T-cell (primary cell): ENCODE measurements at regions of chr14 and their contacts with region 1.

Region 1: DNA sequence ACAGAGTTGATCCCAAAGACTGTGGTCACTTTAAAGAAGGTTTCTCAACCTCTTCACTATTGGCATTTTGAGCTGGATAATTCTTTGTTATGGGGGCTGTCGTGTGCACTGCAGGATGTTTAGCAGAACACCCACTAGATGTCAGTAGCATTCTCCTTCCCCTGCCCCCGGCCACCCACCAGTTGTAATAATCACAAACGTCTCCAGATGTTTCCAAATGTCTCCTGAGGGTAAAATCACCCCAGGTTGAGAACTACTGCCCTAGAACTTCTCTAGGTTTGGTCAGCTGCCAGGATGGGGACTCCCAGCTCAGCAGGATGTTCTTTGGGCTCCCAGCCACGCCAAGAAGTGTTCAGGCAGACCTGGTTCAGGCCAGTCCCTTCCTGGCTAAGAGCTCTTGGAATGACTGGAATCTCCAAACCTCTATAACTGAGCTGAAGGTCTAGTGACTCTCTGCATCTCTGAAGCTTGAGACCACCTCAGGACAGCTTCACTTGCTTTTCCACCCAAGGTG is 12.5 kb upstream of the AJUBA start:
- DNase-seq: peak in 10 of 35 experiments; percentile 24 to 62 (median 32)
- ATAC-seq: peak; percentile 69 to 85 (median 75)
- H3K4me3 ChIP-seq: no peak overlapping the region
- H3K4me3 Mint-ChIP-seq: no peak overlapping the region
- H3K27ac ChIP-seq: no peak overlapping the region
- H3K27ac Mint-ChIP-seq: no peak overlapping the region
- H3K4me1 ChIP-seq: peaks cover 0 to 4% of the 10 kb centered on the region in 2 experiments
- H3K4me1 Mint-ChIP-seq: no peaks in the 10 kb centered on the region
- H3K27me3 ChIP-seq: no peaks in the 10 kb centered on the region
- H3K27me3 Mint-ChIP-seq: no peaks in the 10 kb centered on the region

Region 2: DNA sequence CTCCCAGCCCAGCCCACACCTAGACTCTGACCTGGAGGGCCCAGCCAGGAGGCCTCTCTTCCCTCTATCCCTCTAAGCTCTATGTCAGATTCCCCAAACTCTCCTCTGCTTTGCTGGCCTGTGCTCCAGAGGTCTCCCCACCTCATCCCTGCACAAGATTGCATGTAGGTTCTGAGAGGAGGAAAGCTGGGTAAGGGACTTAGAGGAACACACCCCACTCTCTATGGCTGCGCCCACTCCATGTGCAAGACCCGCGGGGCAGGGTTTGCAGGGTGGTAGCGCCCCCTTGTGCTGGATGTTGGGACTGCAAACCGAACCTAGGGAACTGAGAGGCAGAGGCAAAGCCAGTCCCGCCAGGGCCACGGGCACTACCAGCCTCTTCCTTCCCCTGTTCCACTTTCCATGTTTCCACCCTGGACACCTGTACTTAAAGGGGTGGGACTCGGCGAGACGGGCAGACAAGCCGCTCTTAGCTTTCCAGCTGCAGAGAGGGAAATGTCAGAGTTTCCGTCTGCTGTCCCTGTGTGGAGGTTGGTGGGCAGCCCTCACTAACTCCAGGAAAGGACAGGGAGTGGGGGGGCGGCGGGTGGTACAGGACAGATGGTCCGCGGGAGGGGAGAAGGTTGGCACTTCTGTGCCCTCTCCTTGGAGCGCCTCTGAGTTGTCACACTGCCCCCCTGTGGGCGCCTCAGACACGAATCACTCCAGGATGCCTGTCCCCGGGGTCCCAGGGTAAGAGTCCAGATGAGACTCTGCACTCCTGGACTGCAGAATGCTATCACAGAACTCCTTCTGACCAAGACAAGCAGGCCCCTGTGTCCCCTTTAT is 141.7 kb before region 1 on chr14:
- CTCF ChIA-PET with region 1: no interaction called
- POLR2A ChIA-PET with region 1: no interaction called
- DNase-seq: peak; percentile 64 to 95 (median 86)
- ATAC-seq: peak; percentile 90 to 92 (median 91)
- H3K4me3 ChIP-seq: peak overlapping the region; percentile 74 to 81
- H3K4me3 Mint-ChIP-seq: peak overlapping the region; percentile 75 to 79 (median 78)
- H3K27ac ChIP-seq: peak overlapping the region; percentile 25
- H3K27ac Mint-ChIP-seq: peak overlapping the region; percentile 66 to 79
- H3K4me1 ChIP-seq: peaks cover 3 to 18% of the 10 kb centered on the region in 2 experiments
- H3K4me1 Mint-ChIP-seq: peaks cover 6 to 25% (median 23%) of the 10 kb centered on the region in 3 donors
- H3K27me3 ChIP-seq: peaks cover 0 to 45% of the 10 kb centered on the region in 2 experiments
- H3K27me3 Mint-ChIP-seq: peaks cover 6 to 9% of the 10 kb centered on the region in 2 donors

Region 3: DNA sequence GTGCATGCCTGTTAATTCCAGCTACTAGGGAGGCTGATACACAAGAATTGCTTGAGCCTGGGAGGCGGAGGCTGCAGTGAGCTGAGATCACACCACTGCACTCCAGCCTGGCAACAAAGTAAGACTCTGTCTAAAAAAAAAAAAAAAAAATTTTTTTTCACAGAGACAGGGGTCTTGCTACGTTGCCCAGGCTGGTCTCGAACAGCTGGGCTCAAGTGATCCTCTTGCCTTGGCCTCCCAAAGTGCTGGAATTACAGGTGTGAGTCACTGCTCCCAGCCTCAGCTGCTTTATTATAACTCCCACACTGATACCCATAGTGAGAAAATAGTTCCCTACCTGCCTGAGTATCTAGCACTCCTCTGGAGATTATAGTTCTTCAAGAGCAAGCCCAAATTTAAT is 49.2 kb before region 1 on chr14:
- CTCF ChIA-PET with region 1: no interaction called
- POLR2A ChIA-PET with region 1: no interaction called
- DNase-seq: no peak
- ATAC-seq: no peak
- H3K4me3 ChIP-seq: no peak overlapping the region
- H3K4me3 Mint-ChIP-seq: no peak overlapping the region
- H3K27ac ChIP-seq: no peak overlapping the region
- H3K27ac Mint-ChIP-seq: no peak overlapping the region
- H3K4me1 ChIP-seq: no peaks in the 10 kb centered on the region
- H3K4me1 Mint-ChIP-seq: no peaks in the 10 kb centered on the region
- H3K27me3 ChIP-seq: no peaks in the 10 kb centered on the region
- H3K27me3 Mint-ChIP-seq: no peaks in the 10 kb centered on the region

Region 4: GRCh38 chr14:23020143-23021128 is 25.6 kb after region 1 on chr14:
- CTCF ChIA-PET with region 1: interaction called, 6 to 11 read pairs
- POLR2A ChIA-PET with region 1: no interaction called
- DNase-seq: peak in 4 of 35 experiments; percentile 11 to 45 (median 31)
- ATAC-seq: peak; percentile 67 to 85 (median 68)
- H3K4me3 ChIP-seq: peak overlapping the region in 1 of 2 donors; percentile 2
- H3K4me3 Mint-ChIP-seq: peak overlapping the region; percentile 71 to 76 (median 71)
- H3K27ac ChIP-seq: no peak overlapping the region
- H3K27ac Mint-ChIP-seq: peak overlapping the region; percentile 83 to 95
- H3K4me1 ChIP-seq: peaks cover 28 to 38% of the 10 kb centered on the region in 2 experiments
- H3K4me1 Mint-ChIP-seq: peaks cover 43 to 55% (median 45%) of the 10 kb centered on the region in 3 donors
- H3K27me3 ChIP-seq: no peaks in the 10 kb centered on the region
- H3K27me3 Mint-ChIP-seq: no peaks in the 10 kb centered on the region

Region 5: DNA sequence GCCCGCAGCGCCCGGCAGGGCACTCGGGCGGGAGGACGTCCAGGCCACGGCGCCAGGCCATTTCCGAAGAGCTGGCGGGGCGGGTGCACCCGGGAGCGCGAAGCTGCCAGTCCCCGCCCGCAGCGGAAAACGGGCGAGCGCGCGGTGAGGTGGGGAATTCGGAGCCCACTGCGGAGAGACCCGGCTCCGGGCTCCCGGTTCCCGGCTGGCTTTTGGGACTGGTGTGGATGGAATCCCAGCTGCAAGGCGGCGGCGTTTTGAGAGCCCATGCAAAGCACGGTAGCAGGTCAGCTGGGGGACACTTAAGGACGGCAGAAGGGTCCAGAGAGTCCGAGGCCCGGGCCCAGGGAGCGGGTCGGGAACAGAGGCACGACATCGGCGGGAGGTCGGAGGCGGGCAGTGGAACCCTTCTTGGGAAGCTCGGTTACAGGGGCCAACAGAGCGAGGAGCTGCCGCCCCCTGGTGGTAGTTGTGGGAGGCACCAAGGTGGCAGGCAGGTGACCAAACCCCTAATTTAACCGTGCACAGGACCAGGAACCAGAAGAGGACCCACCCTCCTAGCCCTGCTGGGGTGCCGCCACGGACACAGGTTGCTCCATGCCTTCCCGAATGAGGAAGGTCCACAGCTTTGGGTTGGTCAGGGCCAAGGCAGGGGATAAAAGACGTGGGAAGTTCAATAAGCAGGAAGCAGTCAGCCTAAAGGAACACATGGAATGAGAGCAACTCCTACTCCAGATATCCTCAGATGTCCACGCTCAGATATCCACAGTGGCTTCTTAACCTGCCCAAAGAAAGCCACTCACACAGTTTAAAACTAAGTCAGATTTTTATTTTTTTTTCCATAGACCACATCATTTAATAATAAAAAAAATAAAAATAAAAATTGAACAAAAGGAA is 63.2 kb after region 1 on chr14:
- CTCF ChIA-PET with region 1: interaction called, 8 to 140 read pairs
- POLR2A ChIA-PET with region 1: interaction called in 1 of 2 experiments, 5 read pairs
- DNase-seq: peak; percentile 61 to 93 (median 80)
- ATAC-seq: peak; percentile 71 to 77 (median 72)
- H3K4me3 ChIP-seq: peak overlapping the region; percentile 77 to 86
- H3K4me3 Mint-ChIP-seq: peak overlapping the region; percentile 82 to 84 (median 84)
- H3K27ac ChIP-seq: no peak overlapping the region
- H3K27ac Mint-ChIP-seq: peak overlapping the region; percentile 70 to 81
- H3K4me1 ChIP-seq: peaks cover 6 to 20% of the 10 kb centered on the region in 2 experiments
- H3K4me1 Mint-ChIP-seq: peaks cover 14 to 21% (median 17%) of the 10 kb centered on the region in 3 donors
- H3K27me3 ChIP-seq: peaks cover 0 to 6% of the 10 kb centered on the region in 2 experiments
- H3K27me3 Mint-ChIP-seq: no peaks in the 10 kb centered on the region

Region 6: GRCh38 chr14:23085458-23085857 is 90.6 kb after region 1 on chr14:
- CTCF ChIA-PET with region 1: no interaction called
- POLR2A ChIA-PET with region 1: interaction called in 1 of 2 experiments, 11 read pairs
- DNase-seq: no peak
- ATAC-seq: no peak
- H3K4me3 ChIP-seq: no peak overlapping the region
- H3K4me3 Mint-ChIP-seq: no peak overlapping the region
- H3K27ac ChIP-seq: no peak overlapping the region
- H3K27ac Mint-ChIP-seq: no peak overlapping the region
- H3K4me1 ChIP-seq: no peaks in the 10 kb centered on the region
- H3K4me1 Mint-ChIP-seq: peaks cover 27 to 54% (median 36%) of the 10 kb centered on the region in 3 donors
- H3K27me3 ChIP-seq: no peaks in the 10 kb centered on the region
- H3K27me3 Mint-ChIP-seq: no peaks in the 10 kb centered on the region